ENCODE measurements at regions of chr15 and their contacts with region 1.

Region 1: DNA sequence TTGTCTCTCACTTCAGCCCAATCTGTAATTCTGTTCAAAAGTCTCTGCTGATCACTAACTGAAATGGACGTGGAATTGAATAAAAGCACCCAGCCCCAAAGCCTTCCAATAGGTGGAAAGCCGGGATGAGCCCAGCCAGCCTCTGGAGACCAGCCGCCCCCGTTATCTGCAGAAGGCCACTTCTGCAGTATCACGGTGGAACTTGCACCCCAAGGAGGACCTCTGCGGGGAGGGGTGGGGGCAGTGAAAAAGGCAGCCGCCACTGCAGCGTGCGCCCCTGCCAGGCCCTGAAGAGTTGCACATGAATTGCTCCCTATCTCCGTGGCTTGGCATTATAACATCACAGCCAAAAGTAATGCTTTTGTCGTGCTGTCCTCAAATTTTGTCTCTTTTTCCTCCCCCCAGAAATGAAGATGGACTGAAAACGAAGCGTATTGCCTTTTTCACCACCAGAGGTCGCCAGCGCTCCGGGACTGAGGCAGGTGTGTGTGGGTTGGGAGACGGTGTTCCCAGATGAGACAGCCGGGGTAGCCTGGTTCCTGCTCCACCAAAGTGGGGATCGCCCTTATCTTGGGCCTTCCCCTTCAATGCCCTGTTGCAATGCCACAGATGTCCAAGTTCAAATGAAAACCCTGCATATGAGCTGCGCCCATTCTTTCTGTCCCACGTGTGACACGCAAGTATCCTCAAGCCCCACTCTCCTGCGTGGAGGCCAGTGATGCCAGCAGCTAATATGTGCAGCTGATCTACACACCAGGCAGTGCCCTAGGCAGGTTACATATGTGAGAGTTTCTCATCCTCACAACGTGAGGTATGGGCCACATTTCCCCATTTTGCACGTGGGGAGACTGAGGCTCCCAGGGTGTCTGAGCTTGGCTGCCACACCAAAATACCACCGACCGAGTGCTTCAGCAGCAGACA is 96.0 kb downstream of the LRRK1 start:
- DNase-seq: peak in 9 of 10 donors; percentile 66 to 84 (median 76)
- H3K4me3 ChIP-seq: peak overlapping the region in 1 of 59 donors; percentile 3
- H3K27ac ChIP-seq: peak overlapping the region in 9 of 59 donors; percentile 1 to 59 (median 27)
- H3K27me3 ChIP-seq: no peaks in the 10 kb centered on the region
- CTCF ChIP-seq: peak; percentile 62 to 96 (median 88)

Region 2: DNA sequence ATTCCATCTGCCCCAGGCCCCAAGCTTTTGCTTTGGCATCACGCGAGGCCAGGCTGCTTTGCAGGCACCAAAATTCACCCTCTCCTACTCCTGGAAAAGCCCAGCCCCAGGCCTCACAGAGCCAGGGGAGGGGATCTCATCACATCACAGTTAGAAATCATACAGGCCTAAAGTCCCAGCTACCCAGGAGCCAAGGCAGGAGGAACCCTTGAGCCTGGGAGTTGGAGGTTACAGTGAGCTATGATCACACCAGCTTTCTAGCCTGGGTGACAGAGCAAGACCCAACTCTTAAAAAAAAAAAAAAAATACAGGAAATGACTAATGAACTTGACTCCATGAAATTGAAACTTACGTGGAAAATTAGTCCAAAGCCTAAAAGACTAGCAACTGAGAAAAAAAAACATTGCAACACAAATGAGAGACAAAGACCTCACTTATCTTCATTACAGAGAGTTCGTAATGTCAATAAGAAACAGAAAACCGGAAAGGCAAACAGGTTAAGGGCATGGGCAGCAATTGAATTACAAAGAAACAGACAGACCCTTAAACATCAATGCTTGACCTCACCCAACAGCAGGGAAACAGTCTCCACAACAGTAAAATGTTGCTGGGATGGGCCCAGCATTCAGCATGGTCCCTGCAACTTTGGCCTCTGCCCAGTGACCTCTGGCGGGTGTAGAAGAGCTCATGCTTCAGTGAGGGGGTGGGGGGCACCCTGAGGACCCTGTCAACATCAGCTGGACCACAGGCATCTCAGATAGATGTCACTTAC is 55.5 kb after region 1 on chr15:
- intact Hi-C with region 1: loop called in 1 of 2 experiments (anchors 5 kb)
- DNase-seq: peak in 1 of 10 donors; percentile 13
- H3K4me3 ChIP-seq: no peak overlapping the region
- H3K27ac ChIP-seq: peak overlapping the region in 17 of 59 donors; percentile 1 to 61 (median 30)
- H3K27me3 ChIP-seq: no peaks in the 10 kb centered on the region
- CTCF ChIP-seq: no peak

Region 3: GRCh38 chr15:101088788-101089583 is 73.8 kb after region 1 on chr15:
- intact Hi-C with region 1: loop called in 1 of 2 experiments (anchors 10 kb)
- DNase-seq: peak in 8 of 10 donors; percentile 33 to 78 (median 62)
- H3K4me3 ChIP-seq: peak overlapping the region in 25 of 59 donors; percentile 9 to 53 (median 30)
- H3K27ac ChIP-seq: peak overlapping the region in 10 of 59 donors; percentile 1 to 83 (median 38)
- H3K27me3 ChIP-seq: no peaks in the 10 kb centered on the region
- CTCF ChIP-seq: peak; percentile 74 to 100 (median 97)

Region 4: DNA sequence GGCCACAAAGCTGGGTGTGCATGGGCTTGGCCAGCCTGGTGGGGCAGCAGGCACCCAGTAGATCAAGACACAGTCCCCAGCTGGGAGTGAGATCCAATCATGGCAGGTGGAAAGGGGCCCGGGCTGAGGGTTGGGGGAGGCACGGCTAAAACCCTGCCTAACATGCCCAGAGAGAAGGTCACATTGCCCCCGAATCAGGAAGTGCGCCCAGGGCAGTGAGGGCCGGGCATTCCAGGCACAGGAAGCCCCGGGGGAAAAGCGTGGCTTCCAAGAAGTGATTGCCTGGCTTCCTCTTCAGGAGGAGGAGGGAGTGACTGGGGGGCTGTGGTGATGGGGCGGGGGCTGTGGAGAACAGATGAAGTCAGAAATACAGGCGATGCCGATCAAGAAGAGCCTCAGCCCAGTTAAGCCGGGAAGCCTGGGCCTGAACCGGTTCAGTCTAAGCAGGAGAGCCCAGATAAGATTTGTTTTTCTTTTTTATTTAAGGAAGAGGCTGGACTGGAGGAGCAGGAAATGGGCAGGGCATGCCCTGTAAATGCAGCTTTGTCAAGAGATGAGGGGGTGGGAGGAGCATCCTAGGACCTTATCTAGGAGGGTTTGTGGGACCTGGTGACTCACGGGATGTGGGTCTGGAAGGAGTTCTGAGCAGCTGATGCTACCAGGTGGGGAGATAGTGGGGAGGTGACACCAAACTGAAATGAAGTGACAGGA is 152.7 kb after region 1 on chr15:
- intact Hi-C with region 1: no loop called
- DNase-seq: peak in 2 of 10 donors; percentile 25 to 51
- H3K4me3 ChIP-seq: no peak overlapping the region
- H3K27ac ChIP-seq: peak overlapping the region in 51 of 59 donors; percentile 7 to 89 (median 70)
- H3K27me3 ChIP-seq: no peaks in the 10 kb centered on the region
- CTCF ChIP-seq: no peak

Region 5: DNA sequence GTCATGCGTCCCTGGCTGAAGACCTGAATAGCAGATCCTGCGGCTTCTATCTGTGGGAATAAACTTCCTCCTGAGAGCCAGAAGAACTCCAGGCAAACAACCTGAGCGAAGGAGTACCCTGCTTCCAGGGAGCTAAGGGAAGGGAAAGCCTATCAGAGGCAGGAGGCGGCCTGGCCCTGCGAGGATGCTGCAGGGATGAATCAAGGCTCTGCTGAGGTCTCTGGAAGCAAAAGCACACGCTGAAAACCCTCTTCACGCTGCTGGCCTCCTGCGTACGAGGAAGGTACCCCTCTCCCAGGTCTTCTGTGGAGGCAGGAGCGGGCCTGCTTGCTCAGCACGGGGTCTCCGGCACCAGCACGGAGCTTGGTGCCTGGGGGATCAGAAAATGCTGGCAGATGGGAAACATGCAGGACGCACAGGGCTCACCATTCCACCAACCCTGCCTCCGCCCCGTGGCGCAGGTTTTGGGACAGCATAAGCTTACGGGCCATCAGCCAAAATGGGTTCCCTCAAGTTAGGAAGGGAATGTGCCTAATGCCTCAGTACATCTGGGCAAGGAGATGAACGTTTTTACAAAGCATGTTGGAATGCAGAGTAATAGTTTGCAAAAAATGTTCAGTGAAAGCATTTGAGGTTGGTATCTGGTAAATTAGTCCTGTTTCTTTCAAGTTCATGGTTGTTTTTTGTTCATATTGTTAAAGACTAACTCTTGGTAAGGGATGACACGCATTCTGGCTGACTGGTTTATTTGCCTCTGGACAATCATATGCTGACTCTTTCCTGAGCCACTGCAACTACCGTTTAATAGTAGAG is 164.4 kb after region 1 on chr15:
- intact Hi-C with region 1: no loop called
- DNase-seq: peak in 1 of 10 donors; percentile 66
- H3K4me3 ChIP-seq: no peak overlapping the region
- H3K27ac ChIP-seq: peak overlapping the region in 2 of 59 donors; percentile 28 to 66
- H3K27me3 ChIP-seq: no peaks in the 10 kb centered on the region
- CTCF ChIP-seq: no peak

Region 6: DNA sequence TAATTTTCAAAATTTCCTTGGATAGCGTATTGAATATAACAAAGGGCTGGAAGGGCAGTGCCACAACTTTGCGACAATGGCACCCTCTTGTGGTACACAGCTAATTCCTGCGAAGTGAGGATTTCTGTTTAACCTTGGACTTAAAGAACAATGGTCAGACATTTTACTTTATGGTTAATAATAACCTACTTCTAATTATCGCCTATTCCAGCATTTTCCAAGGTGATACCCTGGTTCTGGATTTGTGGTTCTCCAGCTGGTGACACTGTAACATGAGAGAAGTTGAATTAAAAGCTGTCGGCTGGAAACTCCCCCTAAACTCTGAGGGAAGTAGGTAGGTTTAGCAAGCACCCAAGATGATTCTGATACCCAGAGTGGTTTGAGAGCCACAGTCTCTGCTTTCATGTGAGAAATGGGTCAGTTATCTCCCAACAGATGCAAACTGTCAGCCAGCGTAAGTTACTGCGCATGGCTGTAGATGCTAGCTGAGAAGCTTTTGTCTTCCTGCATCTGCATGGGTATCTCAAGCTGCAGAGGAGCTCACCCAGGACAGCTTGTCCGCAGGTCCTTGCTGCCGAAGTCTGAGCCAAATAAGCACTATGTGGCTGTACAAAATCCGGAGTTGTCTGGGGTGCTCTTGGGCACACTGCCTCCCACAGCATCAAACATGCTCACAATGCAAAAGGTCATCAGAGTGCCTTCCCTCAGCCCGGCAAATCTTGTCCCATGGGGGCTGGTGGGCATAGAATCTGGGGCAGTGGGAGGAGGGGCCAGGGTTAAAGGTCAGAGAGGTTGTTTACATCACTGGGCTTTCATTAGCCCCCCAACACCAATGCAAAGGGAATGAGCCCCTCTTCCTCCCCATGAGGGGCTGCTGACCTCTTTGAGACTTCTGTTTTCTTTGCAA is 243.3 kb after region 1 on chr15:
- intact Hi-C with region 1: loop called (anchors 1 to 5 kb)
- DNase-seq: peak in 7 of 10 donors; percentile 61 to 78 (median 64)
- H3K4me3 ChIP-seq: peak overlapping the region in 2 of 59 donors; percentile 7 to 8
- H3K27ac ChIP-seq: peak overlapping the region in 2 of 59 donors; percentile 35 to 50
- H3K27me3 ChIP-seq: no peaks in the 10 kb centered on the region
- CTCF ChIP-seq: peak; percentile 73 to 97 (median 89)

Region 7: DNA sequence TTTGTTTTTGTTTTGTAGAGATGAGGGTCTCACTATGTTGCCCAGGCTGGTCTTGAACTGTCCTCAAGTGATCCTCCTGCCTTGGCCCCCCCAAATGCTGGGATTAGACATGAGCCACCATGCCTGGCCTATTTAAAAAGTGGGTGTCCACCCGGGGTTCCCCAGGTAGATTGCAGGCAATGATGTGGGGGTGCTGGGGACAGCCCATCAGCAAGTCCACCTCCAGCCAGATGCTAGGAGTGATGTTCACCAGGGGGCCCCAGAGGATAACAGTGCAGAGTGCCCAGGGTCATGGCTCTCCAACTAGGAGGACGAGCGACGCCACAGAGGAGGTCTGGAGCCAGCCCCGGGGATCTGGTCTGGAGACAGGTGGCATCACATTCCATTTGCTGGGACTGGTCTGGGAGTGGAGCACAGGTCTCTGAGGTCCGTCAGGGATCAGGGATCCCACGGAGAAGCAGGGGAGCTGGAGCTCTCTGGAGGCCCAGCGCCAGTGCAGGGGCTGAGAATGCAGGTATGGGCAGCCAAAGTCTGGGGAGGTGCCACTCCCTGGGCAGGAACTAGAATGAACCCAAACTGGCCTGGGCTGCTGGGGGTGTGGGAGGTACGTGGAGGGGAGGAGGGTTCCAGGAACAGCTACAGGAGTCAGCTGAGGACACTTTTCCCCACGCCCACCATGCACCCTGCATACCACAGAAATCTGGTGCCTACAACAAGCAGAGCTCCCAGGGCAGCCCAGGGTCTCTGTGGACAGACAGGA is 525.5 kb after region 1 on chr15:
- intact Hi-C with region 1: no loop called
- DNase-seq: no peak
- H3K4me3 ChIP-seq: no peak overlapping the region
- H3K27ac ChIP-seq: no peak overlapping the region
- H3K27me3 ChIP-seq: peaks cover 0 to 17% (median 0%) of the 10 kb centered on the region in 45 donors
- CTCF ChIP-seq: no peak

Region 8: DNA sequence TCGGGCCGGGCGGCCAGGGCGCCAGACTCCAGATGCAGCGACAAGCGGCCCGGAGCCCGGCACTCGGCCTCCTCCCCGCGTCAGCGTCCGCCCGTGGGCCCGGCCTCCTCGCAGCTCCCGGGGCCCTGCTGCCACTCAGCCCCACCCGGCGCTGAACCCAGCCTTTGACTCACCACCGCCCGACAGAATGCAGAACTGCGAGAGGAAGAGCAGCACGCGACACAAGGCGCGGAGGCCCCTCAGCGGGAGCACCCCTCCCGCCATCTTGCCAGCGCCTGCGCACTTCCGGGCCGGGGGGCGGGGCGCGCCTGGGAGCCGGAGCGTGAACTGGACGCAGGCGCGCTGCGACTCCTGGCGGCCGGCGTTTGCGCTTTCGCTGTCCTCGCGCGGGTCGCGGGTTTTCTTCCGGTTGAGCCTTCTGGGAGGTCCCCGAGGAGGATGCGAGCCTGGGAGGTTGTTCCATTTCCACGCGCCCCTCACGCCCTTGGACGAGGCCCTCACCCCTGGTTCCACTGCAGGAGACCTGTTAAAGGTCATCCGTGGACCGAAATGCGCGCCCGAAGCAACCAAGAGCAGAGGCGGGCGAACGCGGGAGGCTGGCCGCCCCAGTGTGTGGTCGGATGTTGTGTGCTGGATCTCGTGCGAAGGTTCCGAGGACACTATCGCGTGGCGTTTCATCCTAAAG is 637.1 kb after region 1 on chr15 and contains the start of gene TM2D3:
- intact Hi-C with region 1: loop called in 1 of 2 experiments (anchors 10 kb)
- DNase-seq: peak; percentile 75 to 92 (median 90)
- H3K4me3 ChIP-seq: peak within 1 kb of the TSS; percentile 58 to 100 (median 91)
- H3K27ac ChIP-seq: peak within 1 kb of the TSS; percentile 82 to 99 (median 97)
- H3K27me3 ChIP-seq: no peaks in the 10 kb centered on the region
- CTCF ChIP-seq: peak; percentile 41 to 93 (median 80)
- total RNA-seq, gene TM2D3: 50.8 to 137 (median 106) TPM

Measured in dorsolateral prefrontal cortex (tissue), 120 donors.